GM12878 (cell line): ENCODE measurements at regions of chr1 and their contacts with region 1.

Region 1: DNA sequence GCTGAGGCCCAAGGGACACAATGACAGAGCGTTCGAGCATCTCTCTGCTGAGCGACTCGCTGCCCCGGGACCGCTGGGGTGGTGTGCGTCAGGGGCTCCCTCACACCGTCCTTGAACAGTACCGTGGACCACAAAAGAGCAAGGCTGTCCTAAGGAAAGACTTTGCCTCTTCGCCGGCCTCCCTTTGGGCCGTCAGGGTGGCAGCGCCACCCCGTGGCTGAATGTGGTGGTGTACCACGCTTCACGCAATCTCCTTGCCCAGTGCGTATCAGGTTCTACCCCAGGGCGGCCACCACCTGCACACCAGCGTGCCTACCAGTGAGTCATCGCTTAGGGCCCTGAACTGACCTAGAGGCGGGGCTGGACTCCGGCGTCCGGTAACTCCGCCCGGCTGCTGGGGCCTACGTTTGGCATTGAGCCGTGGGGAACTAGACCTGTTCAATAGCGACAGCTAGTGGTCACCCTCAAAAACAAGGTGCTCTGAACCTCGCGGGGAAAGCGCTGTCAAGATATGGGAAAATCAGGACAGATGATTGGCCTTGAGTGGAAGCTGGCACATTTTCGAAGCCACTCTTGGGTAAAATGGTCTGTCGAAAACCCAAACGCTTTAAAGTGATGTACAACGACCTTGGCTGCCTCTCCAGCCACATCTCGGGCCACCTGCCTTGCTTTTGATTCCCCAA is 8.1 kb upstream of the TRAF3IP3 start:
- DNase-seq: peak; percentile 82
- ATAC-seq: peak; percentile 94
- H3K4me3 ChIP-seq: peak overlapping the region; percentile 21; the same call in 1 of the 2 replicates
- H3K27ac ChIP-seq: no peak overlapping the region
- H3K4me1 ChIP-seq: peaks cover 36% of the 10 kb centered on the region
- H3K27me3 ChIP-seq: no peaks in the 10 kb centered on the region
- CTCF ChIP-seq: peak; percentile 59 to 96 (median 78); a peak in 5 of 6 replicates
- EP300 ChIP-seq: peak; percentile 22 to 25; a peak in 1 of 4 replicates
- POLR2A ChIP-seq: no peak
- RAD21 ChIP-seq: peak; percentile 67

Region 2: GRCh38 chr1:209601809-209602657 is 145.7 kb before region 1 on chr1:
- CTCF ChIA-PET with region 1: interaction called, 13 read pairs
- POLR2A ChIA-PET with region 1: no interaction called
- RAD21 ChIA-PET with region 1: interaction called, 15 read pairs
- SMC1A ChIA-PET with region 1: interaction called, 9 read pairs
- in situ Hi-C with region 1: no loop called
- intact Hi-C with region 1: loop called (anchors 10 kb)
- DNase-seq: no peak
- ATAC-seq: peak; percentile 95
- H3K4me3 ChIP-seq: no peak overlapping the region
- H3K27ac ChIP-seq: no peak overlapping the region
- H3K4me1 ChIP-seq: peaks cover under 1% of the 10 kb centered on the region; the same call in 1 of the 2 replicates
- H3K27me3 ChIP-seq: no peaks in the 10 kb centered on the region
- CTCF ChIP-seq: peak; percentile 64 to 82 (median 70); a peak in 5 of 6 replicates
- EP300 ChIP-seq: no peak
- POLR2A ChIP-seq: no peak
- RAD21 ChIP-seq: peak; percentile 67

Region 3: DNA sequence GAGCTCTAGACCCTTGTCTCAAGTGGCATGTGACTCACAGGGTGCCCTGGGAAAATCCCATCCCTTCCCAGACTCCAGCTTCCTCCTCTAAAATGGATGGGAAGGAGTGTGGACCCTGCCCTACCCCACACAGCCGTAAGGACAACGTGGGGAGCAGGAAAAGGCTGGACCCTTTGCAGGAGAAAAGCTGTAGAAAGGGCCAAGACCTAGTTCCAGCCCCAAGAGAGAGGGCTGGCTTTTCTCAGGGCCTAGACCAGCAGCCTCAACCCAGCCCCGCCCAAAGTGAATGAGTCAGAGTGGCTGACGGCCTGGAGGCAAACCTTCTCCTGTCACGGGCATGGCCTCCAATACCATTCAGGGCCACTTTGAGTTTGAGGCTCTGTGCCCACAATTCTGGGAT is 96.6 kb before region 1 on chr1:
- CTCF ChIA-PET with region 1: interaction called, 20 read pairs
- POLR2A ChIA-PET with region 1: interaction called, 3 read pairs
- RAD21 ChIA-PET with region 1: interaction called, 12 read pairs
- SMC1A ChIA-PET with region 1: interaction called, 13 read pairs
- in situ Hi-C with region 1: no loop called
- intact Hi-C with region 1: loop called (anchors 5 kb)
- DNase-seq: no peak
- ATAC-seq: peak; percentile 78
- H3K4me3 ChIP-seq: no peak overlapping the region
- H3K27ac ChIP-seq: no peak overlapping the region
- H3K4me1 ChIP-seq: peaks cover 23% of the 10 kb centered on the region
- H3K27me3 ChIP-seq: no peaks in the 10 kb centered on the region
- CTCF ChIP-seq: no peak
- EP300 ChIP-seq: no peak
- POLR2A ChIP-seq: no peak
- RAD21 ChIP-seq: no peak

Region 4: GRCh38 chr1:209692745-209693504 is 54.8 kb before region 1 on chr1:
- CTCF ChIA-PET with region 1: interaction called, 24 read pairs
- POLR2A ChIA-PET with region 1: no interaction called
- RAD21 ChIA-PET with region 1: interaction called, 5 read pairs
- SMC1A ChIA-PET with region 1: interaction called, 60 read pairs
- in situ Hi-C with region 1: no loop called
- intact Hi-C with region 1: loop called (anchors 1 kb)
- DNase-seq: peak; percentile 34
- ATAC-seq: peak; percentile 89
- H3K4me3 ChIP-seq: no peak overlapping the region
- H3K27ac ChIP-seq: no peak overlapping the region
- H3K4me1 ChIP-seq: no peaks in the 10 kb centered on the region
- H3K27me3 ChIP-seq: no peaks in the 10 kb centered on the region
- CTCF ChIP-seq: peak; percentile 80 to 92 (median 83)
- EP300 ChIP-seq: 0 out of 4 replicates have a peak, but pooled peaks of 1 of the 2 experiments have one; percentile 31
- POLR2A ChIP-seq: no peak
- RAD21 ChIP-seq: peak; percentile 97

Region 5: GRCh38 chr1:209733409-209734192 is 14.1 kb before region 1 on chr1:
- CTCF ChIA-PET with region 1: interaction called, 36 read pairs
- POLR2A ChIA-PET with region 1: no interaction called
- RAD21 ChIA-PET with region 1: interaction called, 8 read pairs
- SMC1A ChIA-PET with region 1: interaction called, 9 read pairs
- in situ Hi-C with region 1: no loop called
- intact Hi-C with region 1: no loop called
- DNase-seq: no peak
- ATAC-seq: no peak
- H3K4me3 ChIP-seq: no peak overlapping the region
- H3K27ac ChIP-seq: no peak overlapping the region
- H3K4me1 ChIP-seq: no peaks in the 10 kb centered on the region; the same call in 1 of the 2 replicates
- H3K27me3 ChIP-seq: no peaks in the 10 kb centered on the region
- CTCF ChIP-seq: no peak
- EP300 ChIP-seq: no peak
- POLR2A ChIP-seq: no peak
- RAD21 ChIP-seq: no peak

Region 6: DNA sequence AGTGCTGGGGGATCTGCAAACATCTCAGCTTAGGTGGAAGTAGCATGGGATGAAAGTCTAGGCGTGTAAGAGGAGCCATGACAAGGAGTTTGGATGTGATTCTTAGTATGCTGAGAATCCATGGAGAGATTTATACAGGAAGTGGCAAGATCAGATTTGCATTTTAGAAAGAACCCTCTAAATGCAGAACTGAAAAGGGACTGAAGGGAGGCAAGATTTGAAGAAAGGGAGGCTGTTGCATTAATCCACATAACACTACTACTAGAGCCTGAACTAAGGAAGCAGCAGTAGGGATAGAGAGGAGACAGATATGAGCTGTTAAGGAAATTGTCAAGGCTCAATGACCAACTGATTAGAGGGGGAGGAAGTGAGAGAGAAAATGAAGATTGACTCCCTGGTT is 26.9 kb after region 1 on chr1:
- CTCF ChIA-PET with region 1: interaction called, 117 read pairs
- POLR2A ChIA-PET with region 1: interaction called, 107 read pairs
- RAD21 ChIA-PET with region 1: interaction called, 188 read pairs
- SMC1A ChIA-PET with region 1: interaction called, 282 read pairs
- in situ Hi-C with region 1: no loop called
- intact Hi-C with region 1: no loop called
- DNase-seq: peak; percentile 32
- ATAC-seq: peak; percentile 82
- H3K4me3 ChIP-seq: peak overlapping the region; percentile 6
- H3K27ac ChIP-seq: peak overlapping the region; percentile 60
- H3K4me1 ChIP-seq: peaks cover 42% of the 10 kb centered on the region
- H3K27me3 ChIP-seq: no peaks in the 10 kb centered on the region
- CTCF ChIP-seq: no peak
- EP300 ChIP-seq: no peak; a peak in 1 of 4 replicates
- POLR2A ChIP-seq: no peak
- RAD21 ChIP-seq: no peak